ENCODE measurements at regions of chrX and their contacts with region 1.

Region 1: DNA sequence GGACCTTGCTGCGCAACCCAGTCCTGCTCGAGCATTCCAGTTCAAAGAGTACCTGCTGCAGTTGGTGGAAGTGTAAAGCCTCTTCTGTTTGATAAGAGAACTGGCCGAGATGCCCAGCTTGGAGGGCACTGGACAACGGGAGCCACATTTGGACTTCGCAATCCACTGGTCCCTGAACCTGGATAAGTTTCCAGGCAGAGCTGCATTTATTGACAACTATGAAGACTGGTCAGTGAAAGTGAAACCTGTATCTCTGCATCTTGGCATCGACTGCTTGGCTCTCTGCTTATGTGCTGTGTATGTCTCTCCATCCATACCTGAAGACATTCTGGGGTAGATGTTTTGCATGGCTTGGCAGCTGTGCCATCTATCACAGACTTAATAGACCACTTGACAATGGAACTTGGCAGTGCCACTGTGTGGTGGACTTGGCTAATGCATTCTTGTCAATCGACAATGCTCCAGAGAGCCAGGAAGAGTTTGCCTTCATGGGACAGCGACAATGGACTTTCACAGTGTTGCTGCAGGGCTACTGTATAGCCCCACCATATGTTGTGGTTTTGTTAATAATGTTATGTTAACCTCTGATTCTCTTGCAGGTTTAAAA is 43.5 kb upstream of the ZBTB33 start:
- DNase-seq: no peak
- ATAC-seq: peak in 3 of 4 donors; percentile 39 to 71 (median 43)
- H3K4me3 ChIP-seq: no peak overlapping the region
- H3K27ac ChIP-seq: no peak overlapping the region
- H3K4me1 ChIP-seq: no peaks in the 10 kb centered on the region
- H3K27me3 ChIP-seq: no peaks in the 10 kb centered on the region
- CTCF ChIP-seq: no peak
- POLR2A ChIP-seq: no peak

Region 2: GRCh38 chrX:120090208-120090607 is 116.9 kb before region 1 on chrX:
- intact Hi-C with region 1: loop called in 1 of 2 experiments (anchors 10 kb)
- DNase-seq: no peak
- ATAC-seq: no peak
- H3K4me3 ChIP-seq: no peak overlapping the region
- H3K27ac ChIP-seq: no peak overlapping the region
- H3K4me1 ChIP-seq: no peaks in the 10 kb centered on the region
- H3K27me3 ChIP-seq: no peaks in the 10 kb centered on the region
- CTCF ChIP-seq: no peak
- POLR2A ChIP-seq: no peak